Motor neuron (in vitro differentiated cells): ENCODE measurements at regions of chr11 and their contacts with region 1.

Region 1: GRCh38 chr11:123707606-123708205 is 33.8 kb downstream of the ZNF202 start:
- ATAC-seq: peak; percentile 85 to 97 (median 90)
- H3K4me3 ChIP-seq: no peak overlapping the region
- H3K27ac ChIP-seq: no peak overlapping the region
- H3K4me1 ChIP-seq: peaks cover 0 to 4% of the 10 kb centered on the region in 2 donors

Region 2: DNA sequence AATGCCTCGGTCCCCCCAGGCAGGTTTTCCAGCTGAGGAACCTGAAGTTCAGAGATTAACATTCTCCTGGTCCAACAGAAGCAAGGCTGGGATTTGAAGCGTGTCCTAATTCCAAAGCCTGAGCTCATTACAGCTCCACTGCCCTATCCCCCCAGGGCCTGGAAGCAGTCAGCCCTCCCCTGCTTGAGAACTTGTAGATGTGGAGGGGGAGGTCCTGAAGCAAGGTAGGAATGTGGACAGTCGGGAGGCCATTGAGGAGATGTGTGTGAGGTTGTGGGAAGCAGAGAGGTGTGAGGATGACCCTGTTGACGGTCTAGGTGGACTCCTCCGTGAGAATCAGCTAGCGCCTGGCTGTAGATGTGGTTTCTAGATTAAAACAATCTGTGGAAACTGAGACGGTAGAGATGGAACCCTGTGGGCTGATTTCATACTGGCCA is 269.5 kb before region 1 on chr11:
- in situ Hi-C with region 1: no loop called
- ATAC-seq: peak in 2 of 8 experiments; percentile 29 to 91
- H3K4me3 ChIP-seq: no peak overlapping the region
- H3K27ac ChIP-seq: no peak overlapping the region
- H3K4me1 ChIP-seq: no peaks in the 10 kb centered on the region

Region 3: GRCh38 chr11:123580557-123581275 is 127.0 kb before region 1 on chr11:
- in situ Hi-C with region 1: loop called in 2 of 9 experiments (anchors 25 kb)
- ATAC-seq: peak; percentile 66 to 89 (median 76)
- H3K4me3 ChIP-seq: no peak overlapping the region
- H3K27ac ChIP-seq: no peak overlapping the region
- H3K4me1 ChIP-seq: peaks cover 8 to 13% of the 10 kb centered on the region in 2 donors

Region 4: DNA sequence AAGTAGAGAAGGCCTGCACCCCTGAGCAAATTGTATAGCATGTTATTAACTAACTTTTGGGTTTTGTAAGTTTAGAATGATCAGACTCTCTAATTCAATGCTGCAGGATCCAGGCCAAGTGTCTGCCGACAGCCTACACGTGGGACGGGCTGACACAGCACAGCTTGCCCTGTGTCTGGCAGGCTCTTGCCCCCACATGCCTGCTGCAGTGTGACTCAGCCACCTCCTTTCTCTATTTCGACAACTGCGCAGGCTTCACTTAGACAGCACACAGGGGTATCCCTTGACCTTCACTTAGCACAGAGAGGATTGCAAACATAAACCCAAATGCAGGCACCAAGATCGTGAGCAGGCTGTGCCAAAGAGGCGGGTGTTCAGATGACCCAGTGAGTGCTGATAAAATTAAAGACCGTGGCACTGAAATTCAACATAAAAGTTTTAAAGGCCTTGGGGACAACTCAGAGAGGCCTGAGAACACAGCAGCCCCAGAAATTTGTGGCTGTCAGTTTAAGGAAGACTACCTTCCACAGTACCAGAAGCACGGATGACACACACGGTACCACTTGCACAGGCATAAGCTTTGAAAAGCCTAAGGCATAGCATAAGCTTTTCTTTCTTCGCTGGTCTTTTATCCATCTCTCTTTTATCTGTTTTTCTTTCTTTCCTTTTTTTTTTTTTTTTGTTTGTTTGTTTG is 91.1 kb before region 1 on chr11:
- in situ Hi-C with region 1: loop called in 1 of 9 experiments (anchors 25 kb)
- ATAC-seq: peak in 5 of 8 experiments; percentile 46 to 88 (median 82)
- H3K4me3 ChIP-seq: no peak overlapping the region
- H3K27ac ChIP-seq: no peak overlapping the region
- H3K4me1 ChIP-seq: no peaks in the 10 kb centered on the region

Region 5: GRCh38 chr11:123640677-123641494 is 66.8 kb before region 1 on chr11:
- in situ Hi-C with region 1: loop called in 2 of 9 experiments (anchors 5 to 10 kb)
- ATAC-seq: peak; percentile 86 to 96 (median 90)
- H3K4me3 ChIP-seq: no peak overlapping the region
- H3K27ac ChIP-seq: no peak overlapping the region
- H3K4me1 ChIP-seq: no peaks in the 10 kb centered on the region